Naive thymus-derived CD4-positive, alpha-beta T cell (primary cell): ENCODE measurements at regions of chr6 and their contacts with region 1.

Region 1: GRCh38 chr6:130776287-130776925 is 50.8 kb upstream of the SMLR1 start:
- DNase-seq: no peak
- ATAC-seq: no peak
- H3K4me3 ChIP-seq: no peak overlapping the region
- H3K4me3 Mint-ChIP-seq: peak overlapping the region in 6 of 10 donors; percentile 4 to 55 (median 13)
- H3K27ac ChIP-seq: no peak overlapping the region
- H3K27ac Mint-ChIP-seq: peak overlapping the region in 3 of 9 donors; percentile 6 to 67 (median 13)
- H3K4me1 ChIP-seq: peaks cover 4 to 18% of the 10 kb centered on the region in 2 donors
- H3K4me1 Mint-ChIP-seq: peaks cover 18 to 53% (median 47%) of the 10 kb centered on the region in 7 donors
- H3K27me3 ChIP-seq: no peaks in the 10 kb centered on the region
- H3K27me3 Mint-ChIP-seq: no peaks in the 10 kb centered on the region

Region 2: GRCh38 chr6:129996387-129996786 is 780.0 kb before region 1 on chr6:
- CTCF ChIA-PET with region 1: no interaction called
- POLR2A ChIA-PET with region 1: no interaction called
- intact Hi-C with region 1: no loop called
- DNase-seq: no peak
- ATAC-seq: no peak
- H3K4me3 ChIP-seq: no peak overlapping the region
- H3K4me3 Mint-ChIP-seq: no peak overlapping the region
- H3K27ac ChIP-seq: no peak overlapping the region
- H3K27ac Mint-ChIP-seq: no peak overlapping the region
- H3K4me1 ChIP-seq: no peaks in the 10 kb centered on the region
- H3K4me1 Mint-ChIP-seq: no peaks in the 10 kb centered on the region
- H3K27me3 ChIP-seq: no peaks in the 10 kb centered on the region
- H3K27me3 Mint-ChIP-seq: peaks cover 0 to 25% (median 0%) of the 10 kb centered on the region in 5 donors

Region 3: DNA sequence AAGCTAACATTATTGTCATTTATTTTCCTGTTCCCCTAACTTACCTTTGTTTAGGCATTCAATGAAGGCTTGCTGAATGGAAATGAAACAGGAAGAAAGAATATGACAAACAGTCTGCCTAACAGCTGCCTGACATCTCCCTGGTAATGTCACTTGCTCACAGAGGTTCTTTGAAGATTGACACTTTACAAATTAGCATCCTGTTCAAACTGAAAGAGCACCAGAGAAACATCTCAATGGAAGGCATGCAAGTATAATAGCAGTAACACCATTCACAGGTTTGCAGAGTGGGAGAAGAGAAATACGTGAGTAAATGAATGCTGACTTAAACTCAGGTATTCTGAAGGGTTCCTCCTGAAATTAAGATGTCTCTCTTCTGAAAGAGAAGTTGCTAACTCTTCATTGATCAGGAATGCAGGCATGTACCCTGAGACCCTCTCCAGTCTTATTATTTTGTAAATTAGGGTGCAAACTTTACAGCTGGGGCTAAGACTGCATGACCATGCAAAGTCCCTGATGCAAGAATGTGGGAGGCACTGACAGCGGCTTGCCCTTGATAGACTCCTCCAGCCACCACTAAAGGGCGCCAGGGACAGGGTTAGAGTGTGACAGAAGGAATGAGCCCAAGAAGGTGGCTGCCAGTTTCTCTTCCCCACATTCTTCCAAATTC is 49.5 kb after region 1 on chr6:
- CTCF ChIA-PET with region 1: interaction called, 3 read pairs
- POLR2A ChIA-PET with region 1: no interaction called
- intact Hi-C with region 1: loop called in 1 of 2 experiments (anchors 5 kb)
- DNase-seq: peak in 3 of 9 donors; percentile 5 to 23 (median 9)
- ATAC-seq: no peak
- H3K4me3 ChIP-seq: no peak overlapping the region
- H3K4me3 Mint-ChIP-seq: no peak overlapping the region
- H3K27ac ChIP-seq: no peak overlapping the region
- H3K27ac Mint-ChIP-seq: peak overlapping the region in 1 of 9 donors; percentile 42
- H3K4me1 ChIP-seq: no peaks in the 10 kb centered on the region
- H3K4me1 Mint-ChIP-seq: peaks cover 0 to 13% (median 8%) of the 10 kb centered on the region in 7 donors
- H3K27me3 ChIP-seq: no peaks in the 10 kb centered on the region
- H3K27me3 Mint-ChIP-seq: peaks cover 0 to 4% (median 0%) of the 10 kb centered on the region in 5 donors